A549 (cell line): ENCODE measurements at regions of chr1 and their contacts with region 1.

Region 1: GRCh38 chr1:24688621-24689195 is 45.6 kb downstream of the SRRM1 start:
- DNase-seq: peak; percentile 53 to 67
- ATAC-seq: peak; percentile 89
- H3K4me3 ChIP-seq: no peak overlapping the region
- H3K27ac ChIP-seq: peak overlapping the region; percentile 46 to 67; a peak in 4 of 6 replicates
- H3K4me1 ChIP-seq: peaks cover 6% of the 10 kb centered on the region
- CTCF ChIP-seq: peak; percentile 79
- EP300 ChIP-seq: no peak
- POLR2A ChIP-seq: no peak
- RAD21 ChIP-seq: peak; percentile 85 to 92

Region 2: DNA sequence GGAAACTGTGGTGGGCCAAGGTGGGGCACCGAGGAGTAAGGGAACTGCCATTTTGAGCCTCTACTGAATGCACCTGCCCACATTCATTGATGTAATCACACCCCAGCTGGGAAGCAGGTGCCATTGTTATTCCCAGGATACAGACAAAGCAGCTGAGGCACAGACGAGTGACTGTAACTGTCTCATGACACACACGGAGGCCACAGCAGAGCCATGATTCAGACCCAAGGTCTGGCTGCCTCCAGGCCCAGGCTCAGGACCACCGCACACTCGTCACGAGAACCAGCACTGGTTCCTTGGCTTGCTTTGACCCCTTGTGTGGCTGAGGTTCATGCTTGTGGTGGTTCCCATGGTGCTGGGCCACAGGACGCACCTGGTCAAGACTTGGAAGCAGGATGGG is 10.9 kb after region 1 on chr1:
- CTCF ChIA-PET with region 1: interaction called, 50 read pairs
- POLR2A ChIA-PET with region 1: interaction called, 5 read pairs
- DNase-seq: no peak
- ATAC-seq: no peak; a peak in 1 of 6 replicates
- H3K4me3 ChIP-seq: no peak overlapping the region
- H3K27ac ChIP-seq: no peak overlapping the region
- H3K4me1 ChIP-seq: peaks cover 5% of the 10 kb centered on the region; the same call in 2 of the 3 replicates
- CTCF ChIP-seq: no peak
- EP300 ChIP-seq: no peak
- POLR2A ChIP-seq: no peak
- RAD21 ChIP-seq: no peak

Region 3: DNA sequence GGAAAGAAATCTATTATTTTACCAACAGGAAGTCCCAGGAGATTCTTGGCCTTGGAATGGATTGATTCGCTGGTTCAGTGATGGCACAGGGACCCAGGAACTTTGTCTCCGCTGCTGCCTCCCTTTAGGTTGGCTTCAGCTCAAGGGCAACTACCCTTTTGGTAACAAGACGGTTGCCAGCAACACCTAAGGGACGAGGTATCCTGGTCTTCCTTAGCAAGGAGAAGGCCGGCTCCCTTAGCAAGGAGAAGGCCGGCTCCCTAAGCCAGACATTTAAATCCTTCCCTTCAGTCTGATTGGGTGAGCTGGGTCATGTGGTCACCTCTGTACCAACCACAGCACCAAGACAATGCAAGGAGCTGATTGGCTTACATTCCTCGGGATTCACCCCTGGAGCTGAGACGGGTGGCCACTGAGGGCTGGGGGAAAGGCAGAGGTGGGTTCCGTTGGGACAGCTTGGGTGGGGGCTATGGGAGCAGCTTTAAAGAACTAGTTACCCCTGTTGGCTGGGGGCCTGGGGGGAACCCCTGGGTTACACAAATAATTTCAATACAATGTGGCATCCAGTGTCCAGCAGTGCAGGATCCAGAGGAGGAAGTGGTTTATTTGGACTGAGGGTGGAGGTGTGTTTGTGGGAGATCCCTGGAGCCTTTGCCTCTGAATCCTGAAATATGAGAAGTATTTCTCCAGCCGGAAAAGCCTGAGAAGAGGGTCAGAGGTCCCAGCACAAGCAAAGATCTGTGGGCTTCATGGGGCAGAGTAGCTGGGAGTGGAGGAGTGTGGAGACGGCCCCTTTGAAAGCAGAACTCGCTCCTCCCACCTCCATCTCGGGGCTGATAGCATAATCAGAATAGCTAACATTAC is 35.9 kb after region 1 on chr1:
- CTCF ChIA-PET with region 1: interaction called, 22 read pairs
- POLR2A ChIA-PET with region 1: no interaction called
- DNase-seq: peak; percentile 85 to 87
- ATAC-seq: peak; percentile 89 to 94
- H3K4me3 ChIP-seq: peak overlapping the region; percentile 26
- H3K27ac ChIP-seq: peak overlapping the region; percentile 59 to 78
- H3K4me1 ChIP-seq: peaks cover 20% of the 10 kb centered on the region
- CTCF ChIP-seq: no peak
- EP300 ChIP-seq: no peak
- POLR2A ChIP-seq: no peak
- RAD21 ChIP-seq: no peak

Region 4: DNA sequence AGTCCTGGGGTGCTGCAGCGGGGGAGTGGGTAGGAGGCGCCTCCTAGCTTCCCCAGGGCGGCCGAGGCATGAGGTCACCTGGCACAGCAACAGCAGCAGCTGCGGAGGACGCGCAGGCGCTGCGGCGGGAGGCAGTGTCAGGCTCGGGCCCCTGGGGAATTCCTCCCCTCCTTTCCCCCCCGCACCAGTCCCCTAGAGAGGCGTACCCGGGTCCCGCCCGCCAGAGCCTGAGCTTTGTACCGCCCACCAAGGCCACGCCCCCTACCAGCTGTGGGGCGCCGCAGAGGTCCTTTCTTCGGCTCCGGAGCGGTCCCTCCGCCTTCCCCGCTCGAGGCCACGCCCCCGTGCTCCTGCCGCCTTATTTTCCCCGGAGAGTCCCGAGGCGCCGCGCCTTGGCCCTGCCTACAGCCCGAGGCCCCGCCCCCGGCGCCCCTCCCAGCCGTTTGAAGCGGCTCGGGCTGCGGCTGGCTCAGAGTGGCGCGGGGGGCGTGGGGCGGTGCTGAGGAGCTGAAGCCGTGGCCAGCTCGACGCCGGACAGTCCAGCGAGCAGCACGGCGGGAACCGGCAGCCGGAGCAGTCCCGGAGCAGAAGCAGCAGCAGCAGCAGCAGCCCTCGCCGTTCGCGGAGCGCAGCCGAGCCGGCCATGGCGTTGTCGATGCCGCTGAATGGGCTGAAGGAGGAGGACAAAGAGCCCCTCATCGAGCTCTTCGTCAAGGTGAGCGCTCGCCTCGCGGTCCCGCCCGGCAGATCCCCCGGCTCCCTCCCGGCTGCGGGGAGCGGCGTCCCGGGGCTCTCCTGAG is 56.4 kb after region 1 on chr1 and contains the start of gene CLIC4:
- CTCF ChIA-PET with region 1: interaction called, 12 read pairs
- POLR2A ChIA-PET with region 1: interaction called, 14 read pairs
- DNase-seq: peak; percentile 75 to 98
- ATAC-seq: peak; percentile 91 to 96
- H3K4me3 ChIP-seq: peak within 1 kb of the TSS; percentile 63
- H3K27ac ChIP-seq: peak within 1 kb of the TSS; percentile 88 to 96
- H3K4me1 ChIP-seq: peaks cover 16% of the 10 kb centered on the region; the same call in 2 of the 3 replicates
- CTCF ChIP-seq: no peak
- EP300 ChIP-seq: no peak
- POLR2A ChIP-seq: peak; percentile 94
- RAD21 ChIP-seq: peak in 1 of 2 experiments; percentile 15; a peak in 2 of 5 replicates
- polyA plus RNA-seq, gene CLIC4: 85.4 and 97.4 TPM in 2 replicates

Region 5: DNA sequence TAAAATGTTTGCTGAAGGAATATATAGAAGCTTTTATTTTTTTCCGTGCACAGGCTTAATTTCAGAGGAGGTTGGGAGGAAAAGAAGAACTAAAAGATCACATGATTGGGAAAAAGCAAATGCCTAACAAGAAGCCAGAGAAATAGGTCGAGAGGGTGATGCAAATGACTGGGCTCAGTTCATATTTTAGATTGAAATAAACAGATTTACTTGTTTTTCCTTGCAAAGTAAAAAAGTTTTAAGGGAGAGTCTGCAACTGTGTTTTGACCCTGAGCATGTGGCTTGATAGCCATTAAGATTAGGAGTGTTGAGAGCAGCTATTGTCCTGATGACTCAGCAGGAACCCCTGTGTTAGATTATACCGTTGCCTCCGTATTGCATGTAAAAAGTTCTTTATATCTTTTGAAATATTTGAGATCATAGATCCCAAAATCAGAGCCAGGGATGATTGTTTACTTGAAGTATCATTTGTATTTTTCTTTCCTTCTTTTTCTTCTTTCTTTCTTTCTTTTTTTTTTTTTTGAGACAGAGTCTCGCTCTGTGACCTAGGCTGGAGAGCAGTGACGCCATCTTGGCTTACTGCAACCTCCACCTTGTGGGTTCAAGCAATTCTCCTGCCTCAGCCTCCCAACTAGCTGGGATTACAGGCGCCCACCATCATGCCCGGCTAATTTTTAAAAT is 76.7 kb after region 1 on chr1:
- CTCF ChIA-PET with region 1: interaction called, 13 read pairs
- POLR2A ChIA-PET with region 1: interaction called, 3 read pairs
- DNase-seq: no peak
- ATAC-seq: no peak
- H3K4me3 ChIP-seq: no peak overlapping the region
- H3K27ac ChIP-seq: peak overlapping the region; percentile 24 to 76; a peak in 4 of 6 replicates
- H3K4me1 ChIP-seq: peaks cover 36% of the 10 kb centered on the region
- CTCF ChIP-seq: no peak
- EP300 ChIP-seq: no peak
- POLR2A ChIP-seq: no peak
- RAD21 ChIP-seq: no peak

Region 6: DNA sequence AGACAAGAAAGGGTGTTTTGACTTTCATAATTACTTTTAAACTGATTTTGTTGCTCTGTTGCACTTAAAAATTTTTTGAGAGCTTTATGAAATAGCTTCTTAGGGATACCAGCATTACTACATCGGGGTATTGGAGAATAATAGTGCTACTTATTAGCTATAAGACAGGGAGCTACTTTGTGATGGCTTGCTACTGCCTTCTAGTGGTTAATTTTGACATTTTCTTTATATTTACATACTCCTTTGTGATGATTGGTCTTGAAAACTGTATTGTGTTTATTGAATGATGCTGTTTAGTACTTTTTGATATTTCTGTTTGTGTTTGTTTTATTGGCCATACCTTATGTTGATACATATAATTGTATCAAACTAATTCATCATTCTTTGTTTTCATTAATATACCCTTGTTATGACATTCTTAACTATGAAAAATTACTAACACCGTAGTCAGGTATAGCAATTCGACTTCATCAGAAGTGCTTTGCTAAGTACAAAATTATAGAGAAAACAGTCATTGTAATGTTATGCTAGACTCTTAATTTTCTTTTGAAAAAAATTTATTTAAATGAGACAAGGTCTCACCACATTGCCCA is 142.1 kb after region 1 on chr1:
- CTCF ChIA-PET with region 1: interaction called, 147 read pairs
- POLR2A ChIA-PET with region 1: interaction called, 5 read pairs
- DNase-seq: peak; percentile 34 to 68
- ATAC-seq: peak; percentile 74 to 83
- H3K4me3 ChIP-seq: no peak overlapping the region
- H3K27ac ChIP-seq: no peak overlapping the region
- H3K4me1 ChIP-seq: peaks cover 28% of the 10 kb centered on the region
- CTCF ChIP-seq: peak; percentile 89
- EP300 ChIP-seq: no peak
- POLR2A ChIP-seq: no peak
- RAD21 ChIP-seq: peak; percentile 85 to 88